ENCODE measurements at regions of chr11 and their contacts with region 1.

Region 1: GRCh38 chr11:65786001-65786785 is 670 bp upstream of the OVOL1 start:
- DNase-seq: no peak
- H3K4me3 ChIP-seq: no peak overlapping the region
- H3K27ac ChIP-seq: no peak overlapping the region
- H3K4me1 ChIP-seq: no peaks in the 10 kb centered on the region
- H3K27me3 ChIP-seq: peaks cover 41 to 42% of the 10 kb centered on the region in 2 experiments
- CTCF ChIP-seq: no peak
- POLR2A ChIP-seq: no peak

Region 2: DNA sequence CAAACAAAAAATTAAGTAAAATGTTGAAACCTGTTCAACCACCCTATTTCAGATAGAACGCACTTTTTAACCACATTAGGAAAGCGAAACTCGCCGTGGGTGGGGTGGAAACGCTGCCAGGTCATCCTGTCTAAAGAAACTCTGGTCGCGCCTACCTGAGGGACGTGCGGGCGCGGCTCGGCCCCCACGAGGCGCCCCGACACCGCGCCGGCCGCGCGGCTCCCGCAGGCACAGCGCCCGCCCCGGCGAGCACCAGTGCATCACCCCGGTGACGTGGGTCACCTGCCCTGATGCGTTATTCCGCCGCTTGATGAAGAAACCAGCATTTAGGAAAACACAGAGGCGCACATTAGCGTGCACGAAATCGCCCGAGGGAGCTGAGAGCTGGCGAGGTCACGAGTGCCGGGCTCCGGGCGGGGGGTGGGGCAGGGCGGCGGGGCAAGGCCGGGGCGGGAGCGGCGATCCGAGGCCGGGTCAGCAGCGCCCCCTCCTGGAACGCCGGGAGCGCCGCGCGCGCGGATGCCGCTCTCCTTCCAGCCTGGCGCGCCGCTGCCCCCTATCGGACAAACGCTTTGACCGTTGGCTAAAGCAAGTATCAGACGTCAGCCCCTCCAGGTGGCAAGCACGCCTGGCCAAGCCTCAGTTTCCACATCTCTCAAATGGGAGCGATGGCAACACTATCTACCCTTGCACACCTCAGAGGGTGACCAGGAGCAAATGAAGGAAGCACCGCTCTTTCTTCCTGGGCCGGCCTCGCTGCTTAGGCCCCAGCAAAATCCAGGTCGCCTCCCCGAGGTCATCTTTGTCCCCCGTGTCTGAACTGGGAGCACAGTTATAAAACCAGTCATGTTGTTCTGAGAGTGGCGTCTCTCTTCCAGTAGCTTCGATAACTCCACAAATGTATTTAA is 31.9 kb after region 1 on chr11:
- CTCF ChIA-PET with region 1: interaction called, 28 read pairs
- POLR2A ChIA-PET with region 1: no interaction called
- dilution Hi-C with region 1: no loop called
- intact Hi-C with region 1: no loop called
- DNase-seq: peak; percentile 80
- H3K4me3 ChIP-seq: peak overlapping the region; percentile 13 to 74 (median 66)
- H3K27ac ChIP-seq: no peak overlapping the region
- H3K4me1 ChIP-seq: no peaks in the 10 kb centered on the region
- H3K27me3 ChIP-seq: peaks cover 0 to 2% of the 10 kb centered on the region in 2 experiments
- CTCF ChIP-seq: peak; percentile 97 to 99
- POLR2A ChIP-seq: no peak

Measured in endothelial cell of umbilical vein (primary cell).